Posterior vena cava (tissue), 2 donors: ENCODE measurements at regions of chr1 and their contacts with region 1.

Region 1: GRCh38 chr1:181142096-181142958 is 53.8 kb downstream of the IER5 start:
- DNase-seq: peak; percentile 97

Region 2: GRCh38 chr1:180912801-180913565 is 229.3 kb before region 1 on chr1 and contains the start of gene KIAA1614:
- intact Hi-C with region 1: loop called in 1 of 2 experiments (anchors 5 kb)
- DNase-seq: peak; percentile 87
- total RNA-seq, gene KIAA1614: 10.7 to 12.7 TPM

Region 3: GRCh38 chr1:181033799-181034451 is 108.4 kb before region 1 on chr1 and contains the start of gene MR1:
- intact Hi-C with region 1: loop called in 1 of 2 experiments (anchors 10 kb)
- DNase-seq: no peak
- total RNA-seq, gene MR1: 13.9 to 21.9 TPM

Region 4: DNA sequence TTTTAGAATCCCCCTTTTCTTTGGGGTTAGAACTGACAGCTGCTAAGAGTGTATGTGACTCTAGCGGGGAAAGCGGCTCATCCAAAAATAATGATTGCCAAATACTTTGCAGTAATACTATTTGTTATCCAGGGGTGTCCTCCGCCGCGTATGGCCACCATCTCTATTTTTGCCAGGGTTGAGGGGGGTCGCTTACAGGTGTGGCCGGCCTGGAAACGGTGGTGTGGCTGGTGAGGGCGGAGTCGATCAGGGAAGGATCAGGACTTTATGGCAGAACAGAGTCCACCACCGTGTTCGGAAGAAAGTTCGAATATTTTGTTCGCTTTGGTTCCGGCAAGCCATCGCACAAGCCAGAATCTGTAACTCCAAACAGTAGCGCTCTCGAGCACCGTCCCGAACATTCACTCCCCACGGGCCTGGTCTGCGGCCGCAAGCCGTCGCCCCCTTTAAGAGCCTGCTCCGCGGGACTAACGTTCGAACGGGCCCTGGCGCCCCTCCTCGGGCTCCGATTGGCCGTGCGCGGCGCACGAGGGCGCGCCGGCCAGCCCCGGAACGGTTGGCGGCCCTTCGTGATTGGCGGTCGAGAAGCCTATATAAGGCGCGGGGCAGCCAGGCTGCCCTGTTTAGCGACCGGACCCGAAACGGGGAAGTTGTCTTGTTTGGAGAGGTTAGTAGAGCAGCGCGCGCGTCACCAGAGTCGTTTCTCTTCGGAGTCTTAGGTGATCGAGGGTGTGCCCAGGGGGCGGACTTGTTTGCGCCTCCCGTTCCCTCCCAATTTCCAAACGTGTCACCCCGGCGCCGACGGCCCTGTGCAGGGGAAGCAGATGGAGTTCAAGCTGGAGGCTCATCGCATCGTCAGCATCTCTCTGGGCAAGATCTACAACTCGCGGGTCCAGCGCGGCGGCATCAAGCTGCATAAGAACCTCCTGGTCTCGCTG is 54.0 kb before region 1 on chr1 and contains the start of gene IER5:
- intact Hi-C with region 1: loop called (anchors 2 to 10 kb)
- DNase-seq: peak; percentile 99
- total RNA-seq, gene IER5: 12.0 to 27.3 TPM